ENCODE measurements at regions of chr18 and their contacts with region 1.

Region 1: DNA sequence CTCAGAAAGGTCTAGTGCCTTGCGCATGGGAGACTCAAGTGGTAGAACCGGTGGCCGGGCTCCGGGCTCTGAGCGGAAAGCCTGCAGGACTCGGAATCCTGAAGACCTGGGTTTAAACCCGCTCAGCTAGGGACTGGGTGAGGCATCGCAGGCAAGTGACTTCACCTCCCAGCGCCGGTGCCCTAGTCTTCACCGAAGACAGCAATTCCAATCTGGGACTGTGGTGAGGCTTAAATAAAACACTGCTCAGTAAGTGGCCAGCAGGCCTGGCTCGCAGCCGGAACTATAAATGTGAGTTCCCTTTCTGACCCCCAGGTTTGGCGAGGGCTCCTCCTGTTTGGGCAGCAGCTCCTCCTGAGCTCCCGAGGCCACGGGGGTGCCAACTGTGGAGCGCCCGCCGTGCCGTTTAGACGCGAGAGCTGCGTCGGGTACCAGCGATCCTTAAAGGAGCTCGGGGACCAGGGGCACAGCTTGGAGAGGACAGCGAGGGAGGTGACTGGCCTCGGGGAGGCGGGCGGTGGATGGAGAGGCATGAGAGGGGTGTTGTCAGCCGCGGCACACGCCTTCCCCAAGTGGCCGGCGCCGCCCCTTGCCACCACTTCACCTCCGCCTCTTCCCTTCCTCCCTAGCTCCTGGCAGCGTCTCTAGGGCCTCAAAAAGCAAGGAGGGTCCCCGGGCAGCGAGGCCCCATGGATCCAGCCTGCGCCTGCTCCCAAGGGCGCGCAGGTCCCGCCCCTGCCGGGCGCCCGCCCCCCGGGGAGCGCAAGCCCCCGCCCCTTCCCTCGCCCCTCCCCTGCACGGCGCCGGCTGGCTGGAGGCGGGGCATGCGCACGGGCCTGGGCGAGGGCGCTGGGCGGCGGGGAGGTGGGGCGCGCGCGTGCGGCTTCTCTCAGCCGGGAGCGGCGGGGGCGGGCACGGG is 736 bp upstream of the MTCL1 start:
- DNase-seq: peak; percentile 68 to 93 (median 84)
- H3K4me3 ChIP-seq: peak overlapping the region; percentile 51 to 92 (median 77)
- H3K27ac ChIP-seq: peak overlapping the region; percentile 58 to 96 (median 92)
- H3K27me3 ChIP-seq: no peaks in the 10 kb centered on the region
- CTCF ChIP-seq: peak in 13 of 56 donors; percentile 5 to 46 (median 16)

Region 2: DNA sequence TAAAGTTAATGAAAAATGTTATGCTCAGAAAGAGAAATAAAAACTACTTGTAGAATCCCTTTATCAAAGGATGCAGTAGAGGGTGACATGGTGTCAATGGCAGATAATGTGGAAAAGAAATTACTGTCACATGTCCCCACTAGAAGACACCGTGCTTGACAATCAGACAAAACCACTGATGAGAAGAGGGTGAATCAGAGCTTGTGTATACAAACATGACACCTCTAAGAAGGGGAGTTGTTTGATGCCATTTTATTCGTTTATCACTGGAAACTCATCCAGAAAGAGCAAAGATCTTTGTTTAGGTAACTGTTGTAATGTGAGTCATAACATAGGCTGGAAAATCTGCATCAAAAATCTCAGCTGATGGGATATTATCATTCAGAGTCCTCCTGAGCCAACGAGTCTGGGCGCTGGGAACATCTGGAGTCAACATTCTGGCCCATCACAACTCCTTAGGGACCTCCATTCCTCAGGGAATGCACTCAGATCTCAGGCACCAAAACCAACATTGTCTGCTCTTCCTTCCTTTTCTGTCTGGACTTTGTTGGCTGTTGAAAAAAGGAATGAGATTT is 144.9 kb before region 1 on chr18:
- intact Hi-C with region 1: no loop called
- DNase-seq: no peak
- H3K4me3 ChIP-seq: no peak overlapping the region
- H3K27ac ChIP-seq: no peak overlapping the region
- H3K27me3 ChIP-seq: no peaks in the 10 kb centered on the region
- CTCF ChIP-seq: no peak

Region 3: GRCh38 chr18:8765783-8766463 is 61.3 kb after region 1 on chr18:
- intact Hi-C with region 1: loop called in 1 of 2 experiments (anchors 5 kb)
- DNase-seq: peak in 1 of 10 donors; percentile 14
- H3K4me3 ChIP-seq: peak overlapping the region in 1 of 59 donors; percentile 11
- H3K27ac ChIP-seq: peak overlapping the region in 56 of 59 donors; percentile 13 to 90 (median 70)
- H3K27me3 ChIP-seq: no peaks in the 10 kb centered on the region
- CTCF ChIP-seq: peak in 1 of 56 donors; percentile 6

Region 4: GRCh38 chr18:8988261-8988871 is 283.7 kb after region 1 on chr18:
- intact Hi-C with region 1: loop called (anchors 5 kb)
- DNase-seq: peak; percentile 39 to 83 (median 72)
- H3K4me3 ChIP-seq: no peak overlapping the region
- H3K27ac ChIP-seq: peak overlapping the region in 1 of 59 donors; percentile 76
- H3K27me3 ChIP-seq: no peaks in the 10 kb centered on the region
- CTCF ChIP-seq: peak; percentile 27 to 91 (median 77)

Region 5: GRCh38 chr18:9136315-9137155 is 431.9 kb after region 1 on chr18 and contains the start of gene ANKRD12:
- intact Hi-C with region 1: loop called in 1 of 2 experiments (anchors 10 kb)
- DNase-seq: peak; percentile 94 to 99 (median 97)
- H3K4me3 ChIP-seq: peak within 1 kb of the TSS; percentile 68 to 96 (median 86)
- H3K27ac ChIP-seq: peak within 1 kb of the TSS; percentile 92 to 100 (median 98)
- H3K27me3 ChIP-seq: no peaks in the 10 kb centered on the region
- CTCF ChIP-seq: peak in 21 of 56 donors; percentile 3 to 47 (median 23)
- total RNA-seq, gene ANKRD12: 136 to 273 (median 172) TPM

Region 6: DNA sequence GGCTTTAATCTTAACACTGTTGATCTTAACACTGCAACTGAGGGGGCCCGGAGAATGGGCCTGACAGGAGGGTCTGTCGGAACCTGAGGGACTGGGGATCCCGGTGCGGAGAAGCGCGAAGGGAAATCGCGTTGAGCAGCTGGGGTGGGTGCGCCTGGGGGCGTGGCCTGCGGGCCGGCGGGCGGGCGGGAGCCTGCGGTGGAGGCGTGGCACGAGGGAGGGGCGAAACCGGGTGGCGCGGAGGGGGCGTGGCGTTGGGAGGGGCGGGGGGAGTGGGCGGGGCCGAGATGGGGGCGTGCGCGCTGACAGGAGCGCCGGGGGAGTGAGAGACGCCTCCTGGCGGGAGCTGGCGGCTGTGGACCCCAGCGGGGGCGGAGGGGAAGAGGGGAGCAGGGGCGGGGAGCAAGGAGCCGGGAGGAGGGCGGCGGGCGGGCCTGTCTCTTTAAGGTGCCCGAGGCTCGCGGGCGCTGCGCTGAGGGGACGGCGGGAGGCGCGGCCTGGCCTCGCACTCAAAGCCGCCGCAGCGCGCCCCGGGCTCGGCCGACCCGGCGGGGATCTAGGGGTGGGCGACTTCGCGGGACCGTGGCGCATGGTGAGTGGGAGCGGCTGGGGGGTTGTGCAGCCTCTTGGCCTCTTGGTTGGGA is 629.8 kb after region 1 on chr18 and contains the start of gene TWSG1:
- intact Hi-C with region 1: loop called in 1 of 2 experiments (anchors 10 kb)
- DNase-seq: peak; percentile 76 to 91 (median 88)
- H3K4me3 ChIP-seq: peak within 1 kb of the TSS; percentile 61 to 94 (median 87)
- H3K27ac ChIP-seq: peak within 1 kb of the TSS in 57 of 59 donors; percentile 39 to 93 (median 79)
- H3K27me3 ChIP-seq: no peaks in the 10 kb centered on the region
- CTCF ChIP-seq: peak in 52 of 56 donors; percentile 19 to 74 (median 46)
- total RNA-seq, gene TWSG1: 12.6 to 27.0 (median 18.1) TPM

Measured in dorsolateral prefrontal cortex (tissue), 120 donors.